ENCODE measurements at regions of chr1 and their contacts with region 1.

Region 1: DNA sequence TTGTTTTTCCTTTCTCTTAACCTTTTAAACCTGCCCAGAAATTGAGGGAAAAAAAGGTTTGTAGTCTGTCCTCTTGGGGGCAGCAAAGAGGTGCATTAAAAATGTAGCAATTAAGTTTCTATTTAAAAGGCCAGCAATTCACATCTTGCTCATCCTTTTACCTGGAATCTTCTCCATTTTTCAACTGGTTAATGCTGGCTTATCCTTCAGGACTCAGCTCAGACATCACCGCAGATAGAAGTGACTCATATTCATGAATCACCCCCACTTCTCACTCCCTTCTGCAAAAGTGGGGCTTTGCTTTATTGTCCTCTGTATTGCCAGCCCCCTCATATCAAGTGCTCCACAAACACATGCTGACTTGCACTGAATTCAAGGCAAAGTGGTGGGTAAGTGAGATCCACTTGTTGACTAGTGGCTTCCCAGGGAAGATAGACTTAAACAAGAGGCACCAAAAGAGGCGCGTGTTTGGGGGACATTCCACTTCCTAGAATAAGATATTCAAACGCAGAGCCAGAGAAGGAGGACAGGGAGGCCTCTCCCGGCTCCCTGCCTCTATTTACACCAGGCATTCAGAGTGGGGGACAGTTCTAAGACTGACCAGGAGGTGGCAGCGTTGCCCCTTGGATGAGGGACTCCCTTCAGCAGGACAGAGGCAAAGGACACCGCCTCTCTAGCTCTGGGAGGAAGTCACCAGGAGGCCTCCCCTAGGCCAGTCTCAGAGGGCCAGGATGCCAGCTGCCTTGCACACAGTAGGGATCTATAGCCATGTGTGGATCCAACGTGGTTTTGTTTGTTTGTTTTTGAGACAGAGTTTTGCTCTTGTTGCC is 23.2 kb upstream of the ZNF648 start:
- DNase-seq: peak; percentile 86 to 92
- H3K4me3 ChIP-seq: no peak overlapping the region
- H3K4me3 Mint-ChIP-seq: no peak overlapping the region
- H3K27ac Mint-ChIP-seq: no peak overlapping the region
- H3K4me1 ChIP-seq: peaks cover 33% of the 10 kb centered on the region
- H3K4me1 Mint-ChIP-seq: peaks cover 8% of the 10 kb centered on the region
- H3K27me3 ChIP-seq: no peaks in the 10 kb centered on the region
- H3K27me3 Mint-ChIP-seq: no peaks in the 10 kb centered on the region
- CTCF ChIP-seq: peak; percentile 72 to 92

Region 2: DNA sequence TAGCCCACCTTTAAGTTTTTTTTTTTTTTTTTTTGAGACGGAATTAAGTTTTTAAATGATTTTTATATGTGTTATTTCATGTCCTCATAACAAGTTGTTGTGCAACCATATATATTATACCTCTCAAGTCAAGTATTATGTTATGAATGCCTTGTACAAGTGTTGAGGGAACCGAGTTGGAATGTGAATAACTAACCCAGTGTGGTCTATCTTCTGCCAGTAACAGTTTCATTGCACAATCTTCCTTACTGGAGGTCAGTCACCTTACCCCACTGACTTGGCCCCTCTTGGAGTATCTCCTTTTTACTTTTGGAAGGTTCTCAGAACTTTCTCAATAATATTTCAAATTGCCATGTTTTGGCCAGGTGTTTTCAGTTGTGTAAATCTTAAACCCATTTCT is 399.5 kb before region 1 on chr1:
- CTCF ChIA-PET with region 1: no interaction called
- POLR2A ChIA-PET with region 1: no interaction called
- intact Hi-C with region 1: no loop called
- DNase-seq: no peak
- H3K4me3 ChIP-seq: no peak overlapping the region
- H3K4me3 Mint-ChIP-seq: no peak overlapping the region
- H3K27ac Mint-ChIP-seq: no peak overlapping the region
- H3K4me1 ChIP-seq: no peaks in the 10 kb centered on the region
- H3K4me1 Mint-ChIP-seq: no peaks in the 10 kb centered on the region
- H3K27me3 ChIP-seq: no peaks in the 10 kb centered on the region
- H3K27me3 Mint-ChIP-seq: peaks cover 19% of the 10 kb centered on the region
- CTCF ChIP-seq: no peak

Region 3: DNA sequence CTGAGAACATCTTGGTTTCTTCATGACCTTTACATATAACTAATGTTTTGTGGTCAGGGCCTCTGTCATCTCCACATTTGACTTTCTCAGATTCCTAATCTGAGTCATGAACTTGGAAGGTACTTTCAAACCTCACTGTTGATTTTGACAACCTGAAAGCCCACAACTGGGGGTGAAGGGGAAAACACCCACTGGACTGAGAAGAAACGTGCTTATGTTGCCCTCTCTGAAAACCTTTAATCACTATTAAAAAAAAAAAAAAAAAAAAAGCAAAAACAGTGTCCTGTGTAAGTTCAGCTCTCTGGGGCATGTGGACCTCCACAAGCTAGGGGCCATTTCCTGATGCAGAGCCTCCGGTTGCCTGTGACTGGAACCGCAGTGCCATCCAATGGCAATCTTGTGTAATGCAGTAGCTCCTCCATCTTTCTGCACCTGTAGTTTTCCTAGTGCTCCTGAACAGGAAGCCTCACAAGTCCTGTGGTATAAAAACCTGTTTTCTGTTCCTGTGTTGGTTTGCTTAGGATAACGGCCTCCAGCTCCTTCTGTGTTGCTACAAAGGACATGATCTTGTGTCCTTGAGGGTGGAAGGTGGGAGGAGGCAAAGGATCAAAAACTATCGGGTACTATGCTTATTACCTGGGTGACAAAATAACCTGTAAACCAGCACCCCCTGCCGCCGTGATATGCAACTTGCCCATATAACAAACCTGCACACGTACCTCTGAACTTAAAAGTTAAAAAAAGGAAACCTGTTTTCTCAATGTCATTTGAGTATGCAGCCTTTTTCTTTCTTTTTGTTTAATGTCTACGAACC is 147.7 kb before region 1 on chr1:
- CTCF ChIA-PET with region 1: interaction called, 11 read pairs
- POLR2A ChIA-PET with region 1: no interaction called
- intact Hi-C with region 1: no loop called
- DNase-seq: peak; percentile 63 to 70
- H3K4me3 ChIP-seq: no peak overlapping the region
- H3K4me3 Mint-ChIP-seq: no peak overlapping the region
- H3K27ac Mint-ChIP-seq: no peak overlapping the region
- H3K4me1 ChIP-seq: no peaks in the 10 kb centered on the region
- H3K4me1 Mint-ChIP-seq: no peaks in the 10 kb centered on the region
- H3K27me3 ChIP-seq: no peaks in the 10 kb centered on the region; the same call in 1 of the 2 replicates
- H3K27me3 Mint-ChIP-seq: peaks cover 3% of the 10 kb centered on the region
- CTCF ChIP-seq: peak; percentile 64 to 72

Region 4: GRCh38 chr1:182101415-182102042 is 16.8 kb after region 1 on chr1:
- CTCF ChIA-PET with region 1: interaction called, 9 read pairs
- POLR2A ChIA-PET with region 1: no interaction called
- intact Hi-C with region 1: loop called (anchors 1 kb)
- DNase-seq: peak; percentile 93 to 97
- H3K4me3 ChIP-seq: no peak overlapping the region
- H3K4me3 Mint-ChIP-seq: peak overlapping the region; percentile 71
- H3K27ac Mint-ChIP-seq: peak overlapping the region; percentile 98
- H3K4me1 ChIP-seq: peaks cover 38% of the 10 kb centered on the region
- H3K4me1 Mint-ChIP-seq: peaks cover 47% of the 10 kb centered on the region
- H3K27me3 ChIP-seq: no peaks in the 10 kb centered on the region
- H3K27me3 Mint-ChIP-seq: no peaks in the 10 kb centered on the region
- CTCF ChIP-seq: no peak

Region 5: GRCh38 chr1:182200025-182200812 is 115.5 kb after region 1 on chr1:
- CTCF ChIA-PET with region 1: interaction called, 6 read pairs
- POLR2A ChIA-PET with region 1: no interaction called
- intact Hi-C with region 1: loop called (anchors 2 kb)
- DNase-seq: peak; percentile 75 to 82
- H3K4me3 ChIP-seq: no peak overlapping the region
- H3K4me3 Mint-ChIP-seq: peak overlapping the region; percentile 21
- H3K27ac Mint-ChIP-seq: peak overlapping the region; percentile 13
- H3K4me1 ChIP-seq: peaks cover 44% of the 10 kb centered on the region
- H3K4me1 Mint-ChIP-seq: peaks cover 26% of the 10 kb centered on the region
- H3K27me3 ChIP-seq: no peaks in the 10 kb centered on the region
- H3K27me3 Mint-ChIP-seq: no peaks in the 10 kb centered on the region
- CTCF ChIP-seq: no peak

Region 6: GRCh38 chr1:182235952-182236650 is 151.4 kb after region 1 on chr1:
- CTCF ChIA-PET with region 1: no interaction called
- POLR2A ChIA-PET with region 1: no interaction called
- intact Hi-C with region 1: no loop called
- DNase-seq: no peak
- H3K4me3 ChIP-seq: no peak overlapping the region
- H3K4me3 Mint-ChIP-seq: no peak overlapping the region
- H3K27ac Mint-ChIP-seq: no peak overlapping the region
- H3K4me1 ChIP-seq: no peaks in the 10 kb centered on the region
- H3K4me1 Mint-ChIP-seq: peaks cover 7% of the 10 kb centered on the region
- H3K27me3 ChIP-seq: no peaks in the 10 kb centered on the region
- H3K27me3 Mint-ChIP-seq: no peaks in the 10 kb centered on the region
- CTCF ChIP-seq: no peak

Region 7: GRCh38 chr1:182397771-182398393 is 313.2 kb after region 1 on chr1:
- CTCF ChIA-PET with region 1: interaction called, 16 read pairs
- POLR2A ChIA-PET with region 1: no interaction called
- intact Hi-C with region 1: loop called (anchors 1 kb)
- DNase-seq: peak in 1 of 2 experiments; percentile 34
- H3K4me3 ChIP-seq: no peak overlapping the region
- H3K4me3 Mint-ChIP-seq: no peak overlapping the region
- H3K27ac Mint-ChIP-seq: peak overlapping the region; percentile 62
- H3K4me1 ChIP-seq: peaks cover 23% of the 10 kb centered on the region
- H3K4me1 Mint-ChIP-seq: peaks cover 35% of the 10 kb centered on the region
- H3K27me3 ChIP-seq: no peaks in the 10 kb centered on the region
- H3K27me3 Mint-ChIP-seq: no peaks in the 10 kb centered on the region
- CTCF ChIP-seq: no peak

Region 8: GRCh38 chr1:182595641-182596240 is 511.0 kb after region 1 on chr1:
- CTCF ChIA-PET with region 1: interaction called, 6 read pairs
- POLR2A ChIA-PET with region 1: no interaction called
- intact Hi-C with region 1: loop called (anchors 5 kb)
- DNase-seq: peak in 1 of 2 experiments; percentile 64
- H3K4me3 ChIP-seq: no peak overlapping the region
- H3K4me3 Mint-ChIP-seq: no peak overlapping the region
- H3K27ac Mint-ChIP-seq: no peak overlapping the region
- H3K4me1 ChIP-seq: no peaks in the 10 kb centered on the region
- H3K4me1 Mint-ChIP-seq: no peaks in the 10 kb centered on the region
- H3K27me3 ChIP-seq: no peaks in the 10 kb centered on the region
- H3K27me3 Mint-ChIP-seq: no peaks in the 10 kb centered on the region
- CTCF ChIP-seq: peak; percentile 74 to 83

Measured in Caco-2 (cell line).